HCT116 (cell line): ENCODE measurements at regions of chr13 and their contacts with region 1.

Region 1: DNA sequence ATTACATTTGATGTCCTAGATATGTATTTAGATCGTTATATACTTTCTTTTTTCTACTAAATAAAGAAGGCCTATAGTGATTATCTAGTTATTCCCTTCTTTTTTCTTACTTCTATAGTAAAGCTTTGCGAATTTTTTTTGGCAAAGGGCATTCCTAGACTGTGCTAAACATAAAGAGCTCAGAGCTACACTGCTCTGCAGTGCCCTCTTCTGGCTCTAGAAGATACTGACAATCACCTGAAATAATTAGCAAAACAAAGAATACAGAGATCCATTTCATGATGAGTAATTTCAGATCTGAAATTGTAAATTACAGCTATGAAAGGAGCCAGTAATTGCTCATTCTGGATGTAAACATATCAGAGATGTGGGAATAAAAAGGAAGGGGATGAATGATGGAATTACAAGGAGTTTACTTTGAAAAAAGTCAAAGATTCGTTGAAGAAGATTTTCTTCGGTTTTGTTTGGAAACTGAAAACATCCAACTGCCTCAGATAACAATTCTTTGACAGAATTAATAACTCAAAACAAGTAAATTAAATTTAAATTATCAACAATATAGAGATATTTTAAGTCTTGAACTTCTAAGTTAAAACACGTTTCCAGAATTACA is 288.5 kb downstream of the NALCN start:
- DNase-seq: peak; percentile 21
- ATAC-seq: peak; percentile 80
- H3K4me3 ChIP-seq: no peak overlapping the region
- H3K27ac ChIP-seq: no peak overlapping the region
- H3K4me1 ChIP-seq: no peaks in the 10 kb centered on the region
- H3K27me3 ChIP-seq: no peaks in the 10 kb centered on the region
- CTCF ChIP-seq: peak; percentile 45 to 74 (median 62); a peak in 5 of 6 replicates
- POLR2A ChIP-seq: no peak
- RAD21 ChIP-seq: peak; percentile 60

Region 2: DNA sequence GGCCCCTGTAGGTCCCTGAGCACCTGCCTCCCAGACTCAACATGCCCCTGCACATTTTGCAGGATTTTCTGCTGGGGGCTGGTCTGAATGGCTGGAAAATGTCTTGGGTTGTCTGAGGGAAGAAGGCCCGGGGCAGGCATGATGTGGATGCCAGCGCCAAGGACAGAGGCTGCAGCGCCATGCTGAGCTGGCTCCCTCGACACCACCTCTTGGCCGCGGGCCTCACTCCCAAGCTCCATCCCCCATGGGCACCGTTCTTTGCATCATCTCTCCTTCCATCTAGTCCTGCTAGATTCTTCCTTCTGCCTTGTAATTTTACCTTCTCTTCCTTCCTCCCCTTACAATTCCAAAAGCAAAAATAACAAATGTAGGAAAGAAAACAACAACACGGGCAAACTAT is 1226.9 kb before region 1 on chr13:
- CTCF ChIA-PET with region 1: no interaction called
- POLR2A ChIA-PET with region 1: no interaction called
- RAD21 ChIA-PET with region 1: no interaction called
- intact Hi-C with region 1: loop called (anchors 5 kb)
- DNase-seq: no peak
- ATAC-seq: peak; percentile 15; the same call in 1 of the 2 replicates
- H3K4me3 ChIP-seq: no peak overlapping the region
- H3K27ac ChIP-seq: no peak overlapping the region
- H3K4me1 ChIP-seq: no peaks in the 10 kb centered on the region
- H3K27me3 ChIP-seq: no peaks in the 10 kb centered on the region
- CTCF ChIP-seq: no peak
- POLR2A ChIP-seq: no peak
- RAD21 ChIP-seq: no peak

Region 3: GRCh38 chr13:100573121-100573520 is 554.7 kb before region 1 on chr13:
- CTCF ChIA-PET with region 1: interaction called, 8 read pairs
- POLR2A ChIA-PET with region 1: no interaction called
- RAD21 ChIA-PET with region 1: interaction called in 1 of 2 experiments, 3 read pairs
- intact Hi-C with region 1: loop called (anchors 2 kb)
- DNase-seq: peak; percentile 75
- ATAC-seq: peak; percentile 98
- H3K4me3 ChIP-seq: no peak overlapping the region
- H3K27ac ChIP-seq: no peak overlapping the region
- H3K4me1 ChIP-seq: no peaks in the 10 kb centered on the region
- H3K27me3 ChIP-seq: no peaks in the 10 kb centered on the region
- CTCF ChIP-seq: peak; percentile 58 to 81 (median 73); a peak in 5 of 6 replicates
- POLR2A ChIP-seq: no peak
- RAD21 ChIP-seq: peak; percentile 68

Region 4: DNA sequence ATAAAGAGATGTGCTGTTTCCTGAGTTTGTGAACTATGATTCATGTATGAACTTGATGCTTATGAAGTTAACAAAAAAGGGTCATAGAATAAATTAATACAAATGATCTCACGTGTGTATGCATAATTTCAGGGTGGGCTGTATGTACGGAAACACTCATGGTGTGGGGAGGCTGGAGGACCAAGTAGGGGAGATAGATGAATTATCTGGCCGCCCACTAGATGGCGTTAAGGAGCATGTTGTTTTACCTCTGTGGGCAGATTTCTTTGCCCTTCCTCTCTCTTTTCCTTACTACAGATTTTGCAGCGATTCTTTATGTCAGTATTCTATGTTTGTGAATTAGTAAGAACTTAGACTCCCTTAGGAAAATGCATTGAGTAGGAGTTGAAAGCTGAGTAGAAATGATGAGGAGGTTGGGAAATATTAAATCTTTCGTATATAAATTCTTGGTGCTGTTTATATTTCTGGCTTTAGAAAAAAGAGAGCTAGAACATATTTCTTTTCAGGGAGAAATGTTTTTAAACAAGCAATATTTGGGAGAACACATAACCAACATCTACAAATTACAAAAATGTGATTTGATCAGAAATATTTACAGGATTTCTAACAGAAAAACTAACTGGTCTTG is 405.8 kb before region 1 on chr13:
- CTCF ChIA-PET with region 1: interaction called, 12 read pairs
- POLR2A ChIA-PET with region 1: no interaction called
- RAD21 ChIA-PET with region 1: no interaction called
- intact Hi-C with region 1: loop called (anchors 1 kb)
- DNase-seq: peak; percentile 37
- ATAC-seq: peak; percentile 89
- H3K4me3 ChIP-seq: no peak overlapping the region
- H3K27ac ChIP-seq: no peak overlapping the region
- H3K4me1 ChIP-seq: no peaks in the 10 kb centered on the region
- H3K27me3 ChIP-seq: no peaks in the 10 kb centered on the region
- CTCF ChIP-seq: peak; percentile 33 to 83 (median 71); a peak in 5 of 6 replicates
- POLR2A ChIP-seq: no peak
- RAD21 ChIP-seq: peak; percentile 52

Region 5: GRCh38 chr13:101049166-101049850 is 78.5 kb before region 1 on chr13:
- CTCF ChIA-PET with region 1: no interaction called
- POLR2A ChIA-PET with region 1: no interaction called
- RAD21 ChIA-PET with region 1: no interaction called
- intact Hi-C with region 1: no loop called
- DNase-seq: no peak
- ATAC-seq: no peak
- H3K4me3 ChIP-seq: no peak overlapping the region
- H3K27ac ChIP-seq: no peak overlapping the region
- H3K4me1 ChIP-seq: no peaks in the 10 kb centered on the region
- H3K27me3 ChIP-seq: peaks cover 16% of the 10 kb centered on the region
- CTCF ChIP-seq: no peak
- POLR2A ChIP-seq: no peak
- RAD21 ChIP-seq: no peak

Region 6: DNA sequence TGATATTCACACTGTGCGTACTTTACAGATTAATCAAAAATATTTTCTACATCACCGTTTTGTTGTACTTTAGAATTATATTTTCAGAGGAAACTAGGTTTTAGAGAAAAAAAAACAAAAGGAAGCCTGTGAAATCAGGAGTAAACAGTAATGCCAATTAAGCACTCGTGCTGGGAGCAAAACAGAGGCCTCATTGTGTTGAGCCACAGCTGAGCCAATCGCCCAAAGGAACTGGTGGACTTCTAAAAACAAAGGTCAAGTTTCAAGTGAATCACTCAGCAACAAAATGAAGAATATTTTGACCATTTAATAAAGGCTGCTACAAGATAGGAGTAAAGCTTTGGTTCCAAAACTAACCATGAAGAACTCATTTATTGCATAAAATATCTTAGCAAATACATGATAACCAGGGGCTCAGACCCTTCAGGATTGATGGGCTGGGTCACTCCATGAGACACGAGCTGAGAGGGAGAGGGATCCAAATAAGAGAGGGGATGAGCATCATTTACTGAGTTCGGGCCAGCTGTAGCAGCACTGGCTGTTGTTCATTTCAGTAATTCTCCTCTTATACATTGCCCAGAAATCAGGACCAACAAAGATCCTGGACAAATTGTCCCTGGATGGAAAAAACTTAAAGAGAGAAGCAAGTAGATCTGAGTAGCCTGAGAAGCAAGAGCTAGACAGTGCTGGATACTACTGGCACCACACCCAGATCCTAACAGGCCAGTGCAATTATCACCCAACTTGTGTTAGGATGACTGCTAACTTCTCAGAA is 296.7 kb after region 1 on chr13:
- CTCF ChIA-PET with region 1: no interaction called
- POLR2A ChIA-PET with region 1: no interaction called
- RAD21 ChIA-PET with region 1: no interaction called
- intact Hi-C with region 1: no loop called
- DNase-seq: no peak
- ATAC-seq: no peak
- H3K4me3 ChIP-seq: no peak overlapping the region
- H3K27ac ChIP-seq: no peak overlapping the region
- H3K4me1 ChIP-seq: no peaks in the 10 kb centered on the region
- H3K27me3 ChIP-seq: no peaks in the 10 kb centered on the region
- CTCF ChIP-seq: no peak
- POLR2A ChIP-seq: no peak
- RAD21 ChIP-seq: no peak

Region 7: GRCh38 chr13:101552797-101553196 is 424.9 kb after region 1 on chr13:
- CTCF ChIA-PET with region 1: no interaction called
- POLR2A ChIA-PET with region 1: no interaction called
- RAD21 ChIA-PET with region 1: no interaction called
- intact Hi-C with region 1: no loop called
- DNase-seq: no peak
- ATAC-seq: no peak
- H3K4me3 ChIP-seq: no peak overlapping the region
- H3K27ac ChIP-seq: no peak overlapping the region
- H3K4me1 ChIP-seq: no peaks in the 10 kb centered on the region
- H3K27me3 ChIP-seq: no peaks in the 10 kb centered on the region
- CTCF ChIP-seq: no peak
- POLR2A ChIP-seq: no peak
- RAD21 ChIP-seq: no peak